OCI-LY7 (cell line): ENCODE measurements at regions of chr1 and their contacts with region 1.

Region 1: DNA sequence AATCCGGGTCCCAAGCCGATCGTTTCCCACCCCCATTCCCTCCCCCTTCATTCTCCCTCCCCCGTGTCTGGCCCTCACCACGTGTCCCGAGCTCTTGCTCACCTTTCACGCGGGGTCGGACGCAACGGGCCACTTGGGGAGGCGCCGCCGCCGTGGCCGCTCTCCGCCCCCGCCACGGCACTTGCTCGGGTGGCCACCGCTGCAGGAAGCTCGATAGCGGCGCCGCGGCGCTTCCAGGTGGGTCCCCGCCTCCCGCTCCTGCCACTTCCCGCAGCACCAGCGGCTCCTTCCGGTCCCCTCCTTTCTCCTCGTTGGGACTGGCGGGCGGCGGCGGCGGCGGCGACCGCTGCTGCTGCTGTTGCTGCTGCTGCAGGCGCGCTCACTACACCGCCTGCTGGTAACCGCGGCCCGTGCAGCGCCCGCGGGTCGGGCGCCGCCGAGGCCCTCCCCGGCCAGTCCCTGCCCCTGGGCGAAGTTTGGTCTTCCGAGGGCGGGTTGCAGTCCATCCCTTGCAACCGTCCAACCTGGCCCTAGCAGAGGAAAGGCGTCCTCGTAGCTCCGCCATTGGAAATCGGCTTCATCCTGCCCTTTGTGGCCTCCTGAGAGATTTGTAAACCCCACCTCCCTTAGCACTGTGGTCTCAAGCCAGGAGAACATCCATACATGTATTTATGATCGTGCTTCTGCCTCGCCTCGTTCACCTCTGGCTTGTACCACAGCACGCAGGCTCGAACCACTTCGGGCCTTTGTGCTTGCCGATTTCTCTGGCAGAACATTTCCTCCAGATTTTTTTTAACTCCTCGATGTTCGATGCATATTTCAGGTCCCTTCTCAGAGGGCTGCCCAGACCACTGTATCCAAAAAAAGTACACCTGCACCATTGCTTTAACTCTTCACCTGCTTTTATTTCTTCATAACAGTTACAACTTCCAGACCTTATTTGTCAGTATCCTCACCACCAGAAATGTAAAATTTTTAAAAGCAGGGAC is 996 bp upstream of the ZZZ3 start:
- DNase-seq: peak; percentile 95
- H3K4me3 ChIP-seq: peak overlapping the region; percentile 98
- H3K27ac ChIP-seq: peak overlapping the region; percentile 87
- H3K4me1 ChIP-seq: peaks cover 41% of the 10 kb centered on the region
- CTCF ChIP-seq: peak; percentile 84

Region 2: DNA sequence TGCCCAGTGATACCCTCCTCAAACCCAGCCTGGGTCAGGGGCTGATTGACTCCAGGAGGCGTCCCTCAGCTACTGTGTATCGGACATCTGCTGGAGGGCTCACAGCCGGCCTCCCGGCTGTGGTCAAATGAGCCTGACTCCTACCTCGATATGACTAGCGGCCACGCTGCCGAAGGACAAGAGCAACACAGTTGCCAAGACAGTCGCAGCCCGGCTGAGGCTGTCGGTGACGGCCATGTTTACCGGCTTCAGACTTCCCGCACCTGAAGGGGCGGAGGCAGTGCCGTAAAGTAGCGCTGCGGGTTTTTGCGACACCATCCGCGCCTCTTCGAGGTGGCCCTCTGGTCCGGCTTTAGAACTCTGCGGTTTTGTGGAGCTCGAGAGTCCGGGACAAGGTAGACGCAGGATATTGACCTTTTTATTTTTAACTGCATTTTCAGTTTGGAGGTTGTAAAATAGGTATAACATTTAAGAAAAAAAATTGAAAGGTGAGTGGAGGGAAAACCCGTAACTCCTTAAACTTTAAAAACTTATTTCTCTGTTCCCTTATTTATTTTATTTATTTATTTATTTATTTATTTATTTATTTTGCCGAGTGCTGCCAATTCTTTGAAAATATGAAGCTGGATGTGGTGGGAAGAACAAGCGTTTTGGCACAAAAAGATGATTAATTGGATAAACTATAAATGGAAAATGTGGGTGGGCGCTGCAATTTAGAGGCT is 464.1 kb before region 1 on chr1 and contains the start of gene PIGK:
- CTCF ChIA-PET with region 1: no interaction called
- POLR2A ChIA-PET with region 1: no interaction called
- intact Hi-C with region 1: loop called (anchors 5 kb)
- DNase-seq: peak; percentile 93
- H3K4me3 ChIP-seq: peak within 1 kb of the TSS; percentile 95
- H3K27ac ChIP-seq: peak within 1 kb of the TSS; percentile 57
- H3K4me1 ChIP-seq: peaks cover 7% of the 10 kb centered on the region
- CTCF ChIP-seq: peak; percentile 22; the same call in 1 of the 2 replicates
- total RNA-seq, gene PIGK: 8.6 and 13.3 TPM in 2 replicates

Region 3: DNA sequence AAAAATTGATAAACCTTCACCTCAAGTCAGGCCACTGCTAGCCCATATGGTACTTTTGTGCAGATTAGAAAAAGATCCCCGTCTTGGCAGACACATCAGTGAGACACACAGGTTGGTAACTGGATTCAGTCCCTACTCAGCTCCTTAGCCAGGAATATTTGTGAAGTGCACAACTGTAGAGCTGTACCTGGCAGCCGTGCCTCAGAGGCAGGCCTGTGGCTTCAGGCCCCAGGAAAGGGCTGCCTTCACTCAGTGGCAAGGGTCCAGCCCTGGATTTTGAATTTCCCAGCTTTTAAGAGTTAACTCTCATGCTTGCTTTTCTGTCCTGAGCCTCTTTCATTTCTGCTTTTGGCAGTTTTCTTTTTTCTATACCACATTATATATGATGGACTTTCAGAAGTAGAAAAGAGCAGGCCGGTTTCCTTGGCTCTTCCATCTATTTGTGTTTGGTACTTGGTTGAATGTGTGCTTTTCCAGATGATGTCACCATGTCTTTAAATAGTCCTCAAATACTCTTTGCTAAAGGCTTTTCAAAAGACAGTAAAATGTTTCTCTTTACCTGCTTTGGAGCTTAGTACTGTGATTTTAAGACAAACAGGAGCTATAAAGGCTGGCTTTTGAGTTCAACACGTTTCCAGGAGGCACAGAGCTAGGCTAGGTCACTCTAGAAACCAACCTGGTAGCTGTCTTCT is 215.1 kb before region 1 on chr1:
- CTCF ChIA-PET with region 1: no interaction called
- POLR2A ChIA-PET with region 1: no interaction called
- intact Hi-C with region 1: no loop called
- DNase-seq: no peak
- H3K4me3 ChIP-seq: no peak overlapping the region
- H3K27ac ChIP-seq: no peak overlapping the region
- H3K4me1 ChIP-seq: no peaks in the 10 kb centered on the region
- CTCF ChIP-seq: no peak

Region 4: GRCh38 chr1:77759071-77760028 is 75.9 kb after region 1 on chr1 and contains the start of gene USP33:
- CTCF ChIA-PET with region 1: no interaction called
- POLR2A ChIA-PET with region 1: interaction called, 4 read pairs
- intact Hi-C with region 1: loop called (anchors 2 kb)
- DNase-seq: peak; percentile 93
- H3K4me3 ChIP-seq: peak within 1 kb of the TSS; percentile 83
- H3K27ac ChIP-seq: peak within 1 kb of the TSS; percentile 61
- H3K4me1 ChIP-seq: peaks cover 36% of the 10 kb centered on the region
- CTCF ChIP-seq: 0 out of 2 replicates have a peak, but pooled peaks have one; percentile 15
- total RNA-seq, gene USP33: 44.1 and 47.8 TPM in 2 replicates

Region 5: DNA sequence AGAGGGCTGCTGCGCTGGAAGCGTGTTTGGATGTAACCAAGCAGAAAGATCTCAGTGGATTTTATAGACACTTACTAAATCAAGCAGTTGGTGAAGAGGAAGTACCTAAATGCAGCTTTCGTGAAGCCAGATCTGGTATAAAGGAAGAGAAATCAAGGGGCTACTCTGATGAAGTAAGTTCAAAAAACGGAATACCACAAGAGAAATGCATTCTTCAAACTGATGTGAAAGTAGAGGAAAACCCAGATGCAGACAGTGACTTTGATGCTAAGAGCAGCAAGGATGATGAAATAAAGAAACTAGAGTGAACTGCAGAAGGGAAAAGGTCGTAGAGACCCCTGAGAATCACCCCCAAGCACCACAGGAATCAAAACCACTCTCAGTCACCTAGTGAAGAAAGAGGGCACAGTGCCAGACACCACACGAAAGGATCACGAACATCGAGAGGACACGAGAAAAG is 164.2 kb after region 1 on chr1:
- CTCF ChIA-PET with region 1: no interaction called
- POLR2A ChIA-PET with region 1: no interaction called
- intact Hi-C with region 1: loop called (anchors 5 kb)
- DNase-seq: peak; percentile 79
- H3K4me3 ChIP-seq: peak overlapping the region; percentile 55
- H3K27ac ChIP-seq: peak overlapping the region; percentile 69
- H3K4me1 ChIP-seq: peaks cover 31% of the 10 kb centered on the region
- CTCF ChIP-seq: no peak

Region 6: GRCh38 chr1:77978969-77979876 is 295.8 kb after region 1 on chr1 and contains the start of gene FUBP1:
- CTCF ChIA-PET with region 1: no interaction called
- POLR2A ChIA-PET with region 1: interaction called, 6 read pairs
- intact Hi-C with region 1: loop called (anchors 1 kb)
- DNase-seq: peak; percentile 99
- H3K4me3 ChIP-seq: peak within 1 kb of the TSS; percentile 87
- H3K27ac ChIP-seq: peak within 1 kb of the TSS; percentile 90
- H3K4me1 ChIP-seq: peaks cover 44% of the 10 kb centered on the region
- CTCF ChIP-seq: peak; percentile 79
- total RNA-seq, gene FUBP1: 234 and 256 TPM in 2 replicates

Region 7: DNA sequence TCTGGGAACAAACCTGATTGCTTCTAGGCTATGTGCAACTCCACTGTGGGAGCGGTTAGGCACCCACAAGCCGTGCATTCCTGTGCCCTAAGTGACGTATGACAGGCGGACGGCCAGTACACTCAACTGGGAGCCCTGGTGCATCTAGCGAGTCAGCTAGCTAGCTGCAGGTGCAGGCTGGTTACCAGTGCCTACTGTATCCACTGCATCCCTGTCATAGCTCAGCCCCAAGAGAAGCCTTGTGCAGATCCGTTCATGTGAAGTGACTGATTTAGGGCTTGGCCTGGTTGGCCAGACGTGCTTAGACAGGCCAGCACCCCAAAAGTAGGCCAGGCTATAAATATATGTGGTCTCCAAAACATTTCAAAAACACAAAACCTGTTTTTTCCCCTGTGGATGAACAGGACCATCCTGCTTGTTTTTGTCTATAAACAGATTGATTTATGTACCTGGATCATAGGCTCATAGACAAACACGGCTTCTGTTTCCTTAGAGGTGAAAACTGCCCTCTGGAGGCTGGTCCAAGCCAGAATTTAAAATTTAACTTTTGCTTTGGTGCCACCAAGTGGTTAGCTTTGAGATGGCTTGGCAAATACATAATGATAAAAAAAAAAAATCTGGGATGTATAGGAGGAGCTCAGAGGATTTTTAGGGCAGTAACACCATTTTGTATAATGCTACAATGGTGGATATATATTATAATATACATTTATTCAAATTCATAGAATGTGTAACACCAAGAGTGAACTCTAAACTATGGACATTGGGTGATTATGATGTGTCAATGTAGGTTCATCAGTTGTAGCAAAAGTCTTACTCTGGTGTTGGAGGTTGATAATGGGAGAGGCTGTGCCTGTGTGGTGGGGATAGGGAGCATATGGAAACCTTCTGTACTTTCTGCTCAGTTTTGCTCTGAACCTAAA is 430.8 kb after region 1 on chr1:
- CTCF ChIA-PET with region 1: no interaction called
- POLR2A ChIA-PET with region 1: no interaction called
- intact Hi-C with region 1: loop called (anchors 1 kb)
- DNase-seq: peak; percentile 81
- H3K4me3 ChIP-seq: no peak overlapping the region
- H3K27ac ChIP-seq: no peak overlapping the region
- H3K4me1 ChIP-seq: no peaks in the 10 kb centered on the region
- CTCF ChIP-seq: peak; percentile 100